ENCODE measurements at regions of chr12 and their contacts with region 1.

Region 1: DNA sequence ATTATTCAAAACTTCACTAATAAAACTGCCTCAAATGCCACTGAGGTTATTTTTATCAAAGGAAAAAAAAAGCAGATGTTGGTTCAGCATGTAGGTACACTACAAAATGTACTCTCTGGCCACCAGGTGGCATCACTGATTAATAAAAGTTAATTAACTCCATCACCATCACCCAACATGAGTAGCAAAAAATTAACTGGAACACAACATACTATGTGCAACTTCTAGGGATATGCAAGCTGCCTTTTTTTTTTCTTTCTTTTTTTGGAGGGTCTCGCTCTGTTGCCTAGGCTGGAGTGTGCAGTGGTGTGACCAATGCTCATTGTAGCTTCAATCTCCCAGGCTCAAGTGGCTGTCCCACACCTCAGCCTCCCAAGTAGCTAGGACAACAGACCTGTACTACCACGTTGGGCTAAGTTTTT is 43.8 kb upstream of the NR2C1 start:
- DNase-seq: no peak
- H3K4me3 ChIP-seq: no peak overlapping the region
- H3K27ac ChIP-seq: no peak overlapping the region
- H3K4me1 ChIP-seq: peaks cover 28% of the 10 kb centered on the region
- H3K27me3 ChIP-seq: no peaks in the 10 kb centered on the region
- CTCF ChIP-seq: peak; percentile 80

Region 2: GRCh38 chr12:94769047-94769420 is 348.2 kb before region 1 on chr12:
- intact Hi-C with region 1: no loop called
- DNase-seq: no peak
- H3K4me3 ChIP-seq: no peak overlapping the region
- H3K27ac ChIP-seq: no peak overlapping the region
- H3K4me1 ChIP-seq: peaks cover 7% of the 10 kb centered on the region
- H3K27me3 ChIP-seq: peaks cover 49% of the 10 kb centered on the region
- CTCF ChIP-seq: no peak

Region 3: GRCh38 chr12:95037906-95038305 is 79.3 kb before region 1 on chr12:
- intact Hi-C with region 1: no loop called
- DNase-seq: no peak
- H3K4me3 ChIP-seq: no peak overlapping the region
- H3K27ac ChIP-seq: no peak overlapping the region
- H3K4me1 ChIP-seq: no peaks in the 10 kb centered on the region
- H3K27me3 ChIP-seq: no peaks in the 10 kb centered on the region
- CTCF ChIP-seq: no peak

Region 4: DNA sequence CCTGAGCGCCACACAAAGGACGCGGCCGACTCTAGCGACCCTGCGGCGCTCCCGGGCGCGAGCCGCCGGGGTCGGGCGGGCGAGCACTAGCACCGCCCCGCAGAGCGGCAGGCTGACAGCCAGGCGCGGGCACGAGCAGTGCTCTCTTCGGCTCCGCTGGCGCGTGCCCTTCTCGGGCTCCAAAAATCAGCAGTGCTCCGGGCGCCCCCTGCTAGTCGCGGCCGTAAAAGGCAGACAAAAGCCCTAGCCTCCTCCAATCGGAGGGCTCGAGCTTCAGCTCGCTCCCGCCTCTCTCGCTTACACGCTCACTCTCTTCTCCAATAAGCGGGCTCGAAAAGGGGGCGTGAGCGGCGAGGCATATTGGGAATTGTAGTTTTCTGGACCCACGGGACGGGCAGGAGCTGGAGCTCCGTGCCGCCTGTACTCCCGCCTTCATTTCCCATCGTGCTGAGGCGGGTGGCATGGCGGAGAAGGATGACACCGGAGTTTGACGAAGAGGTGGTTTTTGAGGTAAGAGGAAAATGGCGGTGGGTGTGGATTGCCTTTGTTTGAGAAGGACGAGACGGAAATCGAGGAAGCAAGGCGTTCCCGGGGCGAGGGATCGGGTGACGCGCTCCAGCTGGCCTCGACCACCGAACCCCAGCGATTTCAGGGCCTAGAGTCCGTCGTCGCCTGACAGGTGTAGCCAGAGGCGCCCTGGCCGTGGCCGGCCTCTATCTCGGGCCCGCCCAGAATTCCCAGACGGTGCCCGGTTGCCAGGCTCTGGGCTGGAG is 100.4 kb after region 1 on chr12 and contains the starts of genes FGD6 and VEZT:
- intact Hi-C with region 1: loop called (anchors 5 kb)
- DNase-seq: peak; percentile 98
- H3K4me3 ChIP-seq: peak within 1 kb of the TSS; percentile 88
- H3K27ac ChIP-seq: peak within 1 kb of the TSS; percentile 97
- H3K4me1 ChIP-seq: peaks cover 75% of the 10 kb centered on the region
- H3K27me3 ChIP-seq: no peaks in the 10 kb centered on the region
- CTCF ChIP-seq: peak; percentile 68
- total RNA-seq, gene FGD6: 26.3 TPM
- total RNA-seq, gene VEZT: 66.1 TPM

Region 5: GRCh38 chr12:95336390-95337067 is 219.3 kb after region 1 on chr12:
- intact Hi-C with region 1: loop called (anchors 5 kb)
- DNase-seq: peak; percentile 49
- H3K4me3 ChIP-seq: peak overlapping the region; percentile 32
- H3K27ac ChIP-seq: peak overlapping the region; percentile 63
- H3K4me1 ChIP-seq: peaks cover 16% of the 10 kb centered on the region
- H3K27me3 ChIP-seq: no peaks in the 10 kb centered on the region
- CTCF ChIP-seq: peak; percentile 93

Region 6: GRCh38 chr12:95368931-95369330 is 251.7 kb after region 1 on chr12:
- intact Hi-C with region 1: no loop called
- DNase-seq: no peak
- H3K4me3 ChIP-seq: no peak overlapping the region
- H3K27ac ChIP-seq: no peak overlapping the region
- H3K4me1 ChIP-seq: no peaks in the 10 kb centered on the region
- H3K27me3 ChIP-seq: no peaks in the 10 kb centered on the region
- CTCF ChIP-seq: no peak

Region 7: GRCh38 chr12:95532851-95533250 is 415.7 kb after region 1 on chr12:
- intact Hi-C with region 1: loop called (anchors 5 kb)
- DNase-seq: no peak
- H3K4me3 ChIP-seq: no peak overlapping the region
- H3K27ac ChIP-seq: no peak overlapping the region
- H3K4me1 ChIP-seq: no peaks in the 10 kb centered on the region
- H3K27me3 ChIP-seq: no peaks in the 10 kb centered on the region
- CTCF ChIP-seq: no peak

Measured in left ventricle myocardium inferior (tissue), 1 donor.